ENCODE measurements at regions of chr6 and their contacts with region 1.

Region 1: GRCh38 chr6:146905181-146905704 is 299.0 kb upstream of the STXBP5 start:
- DNase-seq: no peak
- H3K4me3 ChIP-seq: no peak overlapping the region
- H3K27ac ChIP-seq: no peak overlapping the region
- H3K4me1 ChIP-seq: peaks cover 1 to 33% (median 26%) of the 10 kb centered on the region in 4 experiments
- H3K27me3 ChIP-seq: no peaks in the 10 kb centered on the region

Region 2: GRCh38 chr6:146865756-146866379 is 39.4 kb before region 1 on chr6:
- CTCF ChIA-PET with region 1: interaction called, 11 read pairs
- POLR2A ChIA-PET with region 1: no interaction called
- DNase-seq: no peak
- H3K4me3 ChIP-seq: no peak overlapping the region
- H3K27ac ChIP-seq: no peak overlapping the region
- H3K4me1 ChIP-seq: peaks cover 2 to 20% (median 12%) of the 10 kb centered on the region in 4 experiments
- H3K27me3 ChIP-seq: no peaks in the 10 kb centered on the region

Region 3: DNA sequence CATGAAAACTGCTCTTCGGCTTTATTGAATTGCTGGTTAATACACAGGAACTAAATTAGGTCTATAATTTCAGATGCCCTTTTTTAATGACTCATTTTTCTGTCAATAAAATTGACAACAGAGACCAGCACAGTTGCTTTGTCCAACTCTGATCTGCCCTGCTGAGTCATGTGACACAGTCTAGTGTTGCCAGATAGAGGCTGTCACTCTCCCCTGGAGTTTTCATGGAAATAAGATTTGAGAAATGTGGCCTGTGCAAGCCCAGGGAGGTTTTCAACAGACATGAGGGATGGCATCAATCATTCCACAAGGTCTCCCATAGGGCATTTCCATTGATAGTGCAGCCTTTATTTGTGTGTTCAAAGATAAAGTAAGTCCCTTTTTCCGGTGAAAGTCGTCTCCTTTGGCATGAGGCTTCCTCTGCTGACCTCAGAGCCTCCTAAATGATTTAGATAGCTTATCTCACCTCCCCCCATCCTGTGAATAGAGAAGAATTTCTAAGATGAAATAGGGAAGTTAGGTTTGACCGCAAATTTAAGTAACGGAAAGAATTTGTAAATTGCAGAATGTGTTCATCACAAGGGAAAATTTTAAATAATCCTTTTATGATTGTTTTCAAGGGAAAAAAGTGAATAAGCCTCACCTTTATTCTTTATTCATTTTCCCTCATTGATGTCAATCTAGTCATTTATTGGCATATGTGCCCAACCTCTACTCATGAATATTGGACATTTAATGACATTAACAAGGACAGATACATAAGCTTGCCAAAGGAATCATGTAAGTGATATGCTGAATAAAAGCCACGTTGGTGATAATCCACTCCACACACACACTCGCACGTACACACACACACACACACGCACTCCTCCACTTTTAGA is 28.7 kb before region 1 on chr6:
- CTCF ChIA-PET with region 1: interaction called, 11 read pairs
- POLR2A ChIA-PET with region 1: no interaction called
- DNase-seq: peak; percentile 94 to 97 (median 94)
- H3K4me3 ChIP-seq: peak overlapping the region in 3 of 7 experiments; percentile 27 to 45 (median 33)
- H3K27ac ChIP-seq: peak overlapping the region; percentile 79 to 86
- H3K4me1 ChIP-seq: peaks cover 35 to 65% (median 57%) of the 10 kb centered on the region in 4 experiments
- H3K27me3 ChIP-seq: no peaks in the 10 kb centered on the region

Region 4: GRCh38 chr6:146892613-146893401 is 12.4 kb before region 1 on chr6:
- CTCF ChIA-PET with region 1: interaction called, 13 read pairs
- POLR2A ChIA-PET with region 1: interaction called, 4 read pairs
- DNase-seq: peak; percentile 76 to 97 (median 95)
- H3K4me3 ChIP-seq: peak overlapping the region in 3 of 7 experiments; percentile 12 to 41 (median 21)
- H3K27ac ChIP-seq: peak overlapping the region; percentile 22 to 78
- H3K4me1 ChIP-seq: peaks cover 6 to 57% (median 27%) of the 10 kb centered on the region in 4 experiments
- H3K27me3 ChIP-seq: no peaks in the 10 kb centered on the region

Region 5: DNA sequence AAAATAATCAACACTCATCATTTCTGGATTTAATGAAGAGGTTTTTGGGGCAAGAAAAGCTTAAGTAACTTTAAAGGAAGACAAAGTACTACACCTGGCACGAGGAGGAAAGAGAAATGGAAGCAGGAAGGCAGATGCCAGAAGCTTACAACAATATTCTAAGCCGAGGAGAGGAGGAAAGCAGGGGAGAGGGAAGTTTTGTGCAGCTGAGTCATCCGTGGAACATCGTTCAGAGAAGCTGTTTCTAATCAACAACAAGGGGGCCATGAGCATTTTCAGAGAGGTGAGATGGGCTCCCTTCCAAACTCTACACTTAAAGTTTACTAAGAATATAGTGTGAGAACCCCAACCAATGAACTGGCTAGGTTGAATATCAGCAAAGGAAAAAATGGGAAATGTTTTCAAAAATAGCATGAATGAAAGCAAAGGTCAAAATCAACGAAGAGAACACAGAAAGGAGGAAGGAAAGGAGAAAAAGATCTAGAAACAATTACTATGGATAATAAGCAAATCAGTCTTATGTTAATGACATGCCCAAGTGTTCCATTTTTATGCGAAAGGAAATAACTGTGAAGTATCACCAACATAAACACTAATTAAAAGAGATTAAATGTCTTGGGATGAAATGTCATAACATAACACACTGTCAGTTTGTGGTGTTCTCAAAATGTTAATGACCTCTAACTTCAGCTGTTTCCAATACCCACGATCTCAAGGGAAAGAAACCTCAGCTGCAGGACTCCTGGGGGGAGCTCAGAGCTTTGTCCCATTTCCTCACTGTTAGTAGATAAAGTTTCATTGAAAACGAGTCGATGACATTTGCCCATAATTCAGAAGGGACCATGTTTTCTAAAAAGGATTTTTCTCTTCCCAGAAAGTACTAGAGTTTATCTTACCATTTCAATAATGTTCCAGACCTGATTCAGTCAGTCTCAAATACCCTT is 95.6 kb after region 1 on chr6:
- CTCF ChIA-PET with region 1: no interaction called
- POLR2A ChIA-PET with region 1: no interaction called
- DNase-seq: peak in 2 of 3 donors; percentile 20 to 34
- H3K4me3 ChIP-seq: no peak overlapping the region
- H3K27ac ChIP-seq: no peak overlapping the region
- H3K4me1 ChIP-seq: peaks cover 0 to 3% (median 0%) of the 10 kb centered on the region in 4 experiments
- H3K27me3 ChIP-seq: no peaks in the 10 kb centered on the region

Region 6: DNA sequence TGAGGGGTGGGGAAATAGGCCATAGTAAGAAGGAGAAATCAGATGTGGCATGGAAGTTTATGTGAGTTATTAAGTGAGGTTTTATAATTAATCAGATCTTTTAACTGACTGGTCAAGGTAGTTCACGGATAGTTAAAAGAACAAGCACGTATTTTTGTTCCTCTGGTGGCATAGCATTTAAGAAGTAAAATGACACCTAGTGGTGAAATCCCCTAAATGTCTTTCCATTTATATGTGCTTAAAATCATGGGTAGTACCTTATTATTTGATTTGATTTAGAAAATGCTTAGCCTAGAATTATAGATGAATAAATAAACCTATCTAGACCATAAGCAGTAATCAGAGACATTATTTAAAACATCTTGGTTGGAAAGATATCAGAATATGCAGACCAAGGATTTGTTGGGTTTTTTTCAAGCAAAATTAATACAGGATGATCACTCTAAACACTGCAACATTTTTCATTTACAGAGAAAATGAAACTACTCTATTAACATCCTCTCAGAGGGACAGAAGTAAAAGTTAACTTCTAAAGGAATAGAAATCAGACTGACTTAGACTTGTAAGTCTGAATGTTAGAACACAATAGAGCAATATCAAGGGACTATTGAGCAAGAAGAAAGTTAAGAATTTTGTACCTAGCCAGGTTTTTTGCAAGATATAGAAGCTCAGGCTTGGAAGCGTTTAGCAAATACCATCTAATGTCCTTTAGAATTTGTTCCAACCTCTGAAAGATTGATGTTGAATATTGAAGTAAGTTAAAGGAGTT is 380.0 kb after region 1 on chr6:
- CTCF ChIA-PET with region 1: interaction called, 11 read pairs
- POLR2A ChIA-PET with region 1: no interaction called
- DNase-seq: peak; percentile 65 to 69 (median 67)
- H3K4me3 ChIP-seq: peak overlapping the region in 2 of 7 experiments; percentile 39 to 50
- H3K27ac ChIP-seq: peak overlapping the region; percentile 10 to 54
- H3K4me1 ChIP-seq: peaks cover 8 to 44% (median 18%) of the 10 kb centered on the region in 4 experiments
- H3K27me3 ChIP-seq: no peaks in the 10 kb centered on the region